GM12878 (cell line): ENCODE measurements at regions of chr9 and their contacts with region 1.

Region 1: GRCh38 chr9:5886114-5886939 is 4.4 kb upstream of the MLANA start:
- DNase-seq: peak; percentile 40
- ATAC-seq: peak; percentile 100
- H3K4me3 ChIP-seq: no peak overlapping the region
- H3K27ac ChIP-seq: no peak overlapping the region
- H3K4me1 ChIP-seq: no peaks in the 10 kb centered on the region
- H3K27me3 ChIP-seq: no peaks in the 10 kb centered on the region
- CTCF ChIP-seq: peak; percentile 95 to 96 (median 95); a peak in 5 of 6 replicates
- EP300 ChIP-seq: no peak
- POLR2A ChIP-seq: no peak
- RAD21 ChIP-seq: peak; percentile 98

Region 2: DNA sequence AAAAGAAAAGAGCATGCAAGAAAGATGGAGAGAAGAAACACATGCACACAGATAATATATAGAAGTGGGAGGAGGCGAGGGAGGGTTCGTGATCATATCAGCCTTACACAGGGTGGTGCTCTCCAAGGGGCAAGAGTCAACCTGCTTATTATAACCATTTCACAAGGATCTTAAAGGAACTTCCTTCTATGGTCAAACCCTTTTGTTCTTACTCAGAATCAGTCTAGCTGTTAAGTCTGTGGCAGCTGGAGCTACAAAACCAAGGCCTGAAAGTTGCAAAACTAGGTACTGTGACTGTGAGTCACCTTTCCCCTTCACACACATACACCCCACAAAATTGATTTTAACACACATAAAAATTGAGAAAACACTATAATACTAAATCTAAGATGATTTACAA is 34.9 kb before region 1 on chr9:
- CTCF ChIA-PET with region 1: interaction called, 23 read pairs
- POLR2A ChIA-PET with region 1: interaction called, 3 read pairs
- RAD21 ChIA-PET with region 1: interaction called, 19 read pairs
- SMC1A ChIA-PET with region 1: interaction called, 16 read pairs
- in situ Hi-C with region 1: no loop called
- intact Hi-C with region 1: no loop called
- DNase-seq: peak; percentile 90
- ATAC-seq: peak; percentile 96
- H3K4me3 ChIP-seq: no peak overlapping the region
- H3K27ac ChIP-seq: peak overlapping the region; percentile 54; the same call in 1 of the 2 replicates
- H3K4me1 ChIP-seq: peaks cover 37% of the 10 kb centered on the region
- H3K27me3 ChIP-seq: no peaks in the 10 kb centered on the region
- CTCF ChIP-seq: peak in 1 of 3 experiments; percentile 11; a peak in 1 of 6 replicates
- EP300 ChIP-seq: peak; percentile 34 to 82; a peak in 2 of 4 replicates
- POLR2A ChIP-seq: no peak
- RAD21 ChIP-seq: no peak

Region 3: DNA sequence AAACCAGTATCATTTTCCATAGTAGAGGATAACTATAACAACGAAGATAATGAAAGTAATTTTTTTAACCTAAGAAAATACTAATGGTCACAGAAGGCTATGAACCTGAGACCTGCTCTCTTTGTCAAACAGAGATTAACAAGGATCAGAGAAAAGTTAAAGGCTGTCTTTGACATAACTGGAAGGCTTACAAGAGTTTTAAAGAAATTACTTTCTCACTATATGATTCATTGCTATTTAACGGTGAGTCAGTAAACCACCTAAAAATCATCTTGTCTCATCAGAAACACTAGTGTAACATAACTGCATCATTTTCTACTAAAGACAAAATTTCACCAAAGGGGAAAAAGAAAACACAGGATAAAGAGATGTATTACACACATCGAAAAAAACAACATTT is 23.6 kb after region 1 on chr9:
- CTCF ChIA-PET with region 1: interaction called, 16 read pairs
- POLR2A ChIA-PET with region 1: no interaction called
- RAD21 ChIA-PET with region 1: interaction called, 6 read pairs
- SMC1A ChIA-PET with region 1: interaction called, 9 read pairs
- in situ Hi-C with region 1: no loop called
- intact Hi-C with region 1: no loop called
- DNase-seq: no peak
- ATAC-seq: peak; percentile 21
- H3K4me3 ChIP-seq: no peak overlapping the region
- H3K27ac ChIP-seq: no peak overlapping the region
- H3K4me1 ChIP-seq: no peaks in the 10 kb centered on the region
- H3K27me3 ChIP-seq: no peaks in the 10 kb centered on the region
- CTCF ChIP-seq: no peak
- EP300 ChIP-seq: no peak
- POLR2A ChIP-seq: no peak
- RAD21 ChIP-seq: no peak

Region 4: DNA sequence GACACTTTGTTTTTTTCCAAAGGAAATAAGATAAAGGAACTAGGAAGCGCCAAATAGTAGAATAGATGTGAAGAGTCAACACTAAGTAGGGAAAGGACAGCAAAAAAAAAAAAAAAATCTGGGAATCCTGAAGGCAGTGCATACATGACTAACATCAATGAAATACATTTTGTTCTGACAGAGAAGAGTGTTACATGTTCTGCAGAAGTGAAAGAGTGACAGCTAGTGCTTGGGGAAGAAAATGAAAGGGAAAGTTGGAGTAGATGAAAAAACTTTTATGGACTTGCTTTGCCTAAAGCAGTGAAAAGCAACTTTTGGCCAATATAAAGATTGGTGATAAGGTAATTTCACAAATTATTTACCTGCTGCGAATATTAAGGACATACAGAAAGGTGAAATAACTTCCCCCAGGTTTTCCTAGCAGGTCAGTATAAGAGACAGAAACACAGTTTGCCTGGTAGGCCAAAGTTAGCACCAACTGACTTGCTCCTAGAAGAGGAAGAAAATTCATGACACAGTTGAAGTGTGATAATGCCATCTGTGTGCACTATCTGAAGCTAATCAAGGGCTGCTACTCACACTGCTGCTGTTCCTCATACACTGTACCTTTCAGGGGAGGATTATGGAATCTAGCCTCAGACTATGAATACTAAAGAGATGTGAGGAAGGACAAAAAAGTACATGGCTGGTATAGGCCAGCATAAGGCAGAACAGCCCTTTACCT is 90.5 kb after region 1 on chr9:
- CTCF ChIA-PET with region 1: interaction called, 117 read pairs
- POLR2A ChIA-PET with region 1: no interaction called
- RAD21 ChIA-PET with region 1: interaction called, 79 read pairs
- SMC1A ChIA-PET with region 1: interaction called, 119 read pairs
- in situ Hi-C with region 1: no loop called
- intact Hi-C with region 1: loop called (anchors 1 kb)
- DNase-seq: peak; percentile 11
- ATAC-seq: peak; percentile 88
- H3K4me3 ChIP-seq: no peak overlapping the region
- H3K27ac ChIP-seq: peak overlapping the region; percentile 57
- H3K4me1 ChIP-seq: peaks cover 4% of the 10 kb centered on the region; the same call in 1 of the 2 replicates
- H3K27me3 ChIP-seq: no peaks in the 10 kb centered on the region
- CTCF ChIP-seq: peak; percentile 32 to 68 (median 36); a peak in 4 of 6 replicates
- EP300 ChIP-seq: no peak
- POLR2A ChIP-seq: no peak
- RAD21 ChIP-seq: peak; percentile 70

Region 5: GRCh38 chr9:6015278-6016157 is 129.2 kb after region 1 on chr9 and contains the start of gene RANBP6:
- CTCF ChIA-PET with region 1: interaction called, 12 read pairs
- POLR2A ChIA-PET with region 1: no interaction called
- RAD21 ChIA-PET with region 1: interaction called, 6 read pairs
- SMC1A ChIA-PET with region 1: interaction called, 25 read pairs
- in situ Hi-C with region 1: no loop called
- intact Hi-C with region 1: no loop called
- DNase-seq: peak; percentile 51
- ATAC-seq: peak; percentile 99
- H3K4me3 ChIP-seq: peak within 1 kb of the TSS; percentile 83
- H3K27ac ChIP-seq: peak within 1 kb of the TSS; percentile 80
- H3K4me1 ChIP-seq: peaks cover 12% of the 10 kb centered on the region
- H3K27me3 ChIP-seq: no peaks in the 10 kb centered on the region
- CTCF ChIP-seq: no peak
- EP300 ChIP-seq: no peak
- POLR2A ChIP-seq: peak; percentile 86
- RAD21 ChIP-seq: no peak
- polyA plus RNA-seq, gene RANBP6: 10.9 to 11.7 TPM

Region 6: GRCh38 chr9:6055213-6055612 is 168.9 kb after region 1 on chr9:
- CTCF ChIA-PET with region 1: interaction called, 288 read pairs
- POLR2A ChIA-PET with region 1: interaction called, 6 read pairs
- RAD21 ChIA-PET with region 1: interaction called, 121 read pairs
- SMC1A ChIA-PET with region 1: interaction called, 174 read pairs
- in situ Hi-C with region 1: no loop called
- intact Hi-C with region 1: loop called (anchors 1 kb)
- DNase-seq: peak; percentile 58
- ATAC-seq: peak; percentile 84
- H3K4me3 ChIP-seq: no peak overlapping the region
- H3K27ac ChIP-seq: no peak overlapping the region
- H3K4me1 ChIP-seq: peaks cover 19% of the 10 kb centered on the region
- H3K27me3 ChIP-seq: no peaks in the 10 kb centered on the region
- CTCF ChIP-seq: peak; percentile 51 to 79 (median 64); a peak in 5 of 6 replicates
- EP300 ChIP-seq: no peak
- POLR2A ChIP-seq: no peak
- RAD21 ChIP-seq: peak; percentile 96